GM13976 (cell line): ENCODE measurements at regions of chr20 and their contacts with region 1.

Region 1: DNA sequence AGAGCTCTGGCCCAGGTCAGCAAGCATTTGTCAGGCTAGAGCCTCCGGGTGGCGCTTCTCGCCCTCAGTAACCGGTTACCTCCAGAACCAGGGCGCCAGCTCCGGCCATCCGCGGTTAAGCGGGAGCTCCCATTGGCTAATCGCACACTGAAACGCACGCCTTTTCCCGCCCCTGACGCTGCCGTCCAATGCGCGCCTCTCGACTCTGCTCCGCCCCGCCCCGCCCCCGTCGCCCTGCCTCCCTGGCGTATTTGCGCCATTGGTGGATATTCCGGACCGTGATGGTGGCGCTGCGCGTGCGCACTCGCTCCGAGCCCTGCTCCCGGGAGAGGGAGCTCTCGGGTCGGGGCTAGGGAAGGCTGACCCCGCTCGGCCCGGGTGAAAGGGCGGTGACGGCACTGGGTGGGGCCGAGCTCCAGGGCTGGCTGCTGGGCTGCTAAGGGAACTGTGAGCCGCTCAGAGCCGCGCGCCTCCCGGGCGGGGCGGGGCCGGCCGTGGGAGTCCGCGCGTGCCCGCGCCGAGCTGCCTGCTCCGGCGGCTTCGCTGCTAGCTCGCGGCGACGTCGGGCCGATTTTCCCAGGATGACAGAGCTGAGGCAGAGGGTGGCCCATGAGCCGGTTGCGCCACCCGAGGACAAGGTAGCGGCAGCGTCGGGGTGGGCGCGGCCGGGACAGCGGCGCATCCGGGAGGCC is at the start of gene CDS2:
- DNase-seq: peak; percentile 98
- CTCF ChIP-seq: peak; percentile 83

Region 2: GRCh38 chr20:4905613-4906012 is 221.0 kb before region 1 on chr20:
- in situ Hi-C with region 1: no loop called
- DNase-seq: no peak
- CTCF ChIP-seq: no peak

Region 3: GRCh38 chr20:5187122-5187521 is 60.5 kb after region 1 on chr20:
- in situ Hi-C with region 1: loop called (anchors 5 kb)
- DNase-seq: no peak
- CTCF ChIP-seq: no peak